ENCODE measurements at regions of chr10 and their contacts with region 1.

Region 1: DNA sequence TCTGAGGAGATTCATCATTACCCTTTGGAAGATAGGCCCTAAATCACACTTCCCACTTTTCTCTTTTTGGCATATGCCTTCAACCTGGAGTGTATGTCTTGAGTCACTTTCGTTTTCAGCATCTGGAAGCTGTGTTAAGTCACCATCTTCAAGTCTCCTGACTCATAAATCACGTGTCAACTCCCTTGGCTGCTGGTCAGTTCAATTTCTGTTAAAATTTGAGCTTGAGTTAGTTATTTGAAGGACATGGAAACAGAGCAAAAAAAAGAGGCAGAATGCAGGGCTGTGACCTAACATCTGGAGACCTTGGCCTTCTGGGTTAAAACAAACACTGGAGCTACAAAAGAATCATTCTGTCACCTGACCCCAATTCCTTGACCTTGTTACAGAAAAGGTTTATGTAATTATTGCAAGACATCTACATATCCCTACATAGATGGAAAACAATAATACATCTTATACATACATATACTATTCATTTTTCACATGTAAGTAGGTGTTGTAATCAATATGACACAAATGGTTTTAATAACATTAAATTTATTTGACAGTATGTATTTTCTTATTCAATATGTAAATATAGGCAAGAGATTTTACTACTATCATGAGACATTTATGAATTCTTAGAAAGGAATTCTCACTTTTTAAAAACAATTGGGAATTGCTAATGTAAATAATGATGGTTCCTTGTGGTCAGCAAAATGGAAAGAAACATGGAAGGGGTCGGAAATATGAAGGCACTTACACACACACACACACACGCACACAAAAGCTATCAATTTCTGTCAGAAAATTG is 169.7 kb upstream of the PHYHIPL start:
- DNase-seq: peak; percentile 86
- ATAC-seq: peak; percentile 26; the same call in 2 of the 3 replicates
- H3K4me3 ChIP-seq: peak overlapping the region in 2 of 3 experiments; percentile 17 to 45; a peak in 2 of 6 replicates
- H3K27ac ChIP-seq: peak overlapping the region; percentile 87
- H3K4me1 ChIP-seq: peaks cover 98% of the 10 kb centered on the region
- H3K27me3 ChIP-seq: no peaks in the 10 kb centered on the region
- CTCF ChIP-seq: no peak
- EP300 ChIP-seq: peak in 1 of 2 experiments; percentile 98; a peak in 2 of 4 replicates
- POLR2A ChIP-seq: no peak
- RAD21 ChIP-seq: no peak

Region 2: GRCh38 chr10:58041901-58042300 is 964.8 kb before region 1 on chr10:
- CTCF ChIA-PET with region 1: no interaction called
- POLR2A ChIA-PET with region 1: no interaction called
- in situ Hi-C with region 1: no loop called
- intact Hi-C with region 1: no loop called
- DNase-seq: no peak
- ATAC-seq: no peak
- H3K4me3 ChIP-seq: no peak overlapping the region
- H3K27ac ChIP-seq: no peak overlapping the region
- H3K4me1 ChIP-seq: no peaks in the 10 kb centered on the region
- H3K27me3 ChIP-seq: no peaks in the 10 kb centered on the region
- CTCF ChIP-seq: no peak
- EP300 ChIP-seq: no peak
- POLR2A ChIP-seq: no peak
- RAD21 ChIP-seq: no peak

Region 3: DNA sequence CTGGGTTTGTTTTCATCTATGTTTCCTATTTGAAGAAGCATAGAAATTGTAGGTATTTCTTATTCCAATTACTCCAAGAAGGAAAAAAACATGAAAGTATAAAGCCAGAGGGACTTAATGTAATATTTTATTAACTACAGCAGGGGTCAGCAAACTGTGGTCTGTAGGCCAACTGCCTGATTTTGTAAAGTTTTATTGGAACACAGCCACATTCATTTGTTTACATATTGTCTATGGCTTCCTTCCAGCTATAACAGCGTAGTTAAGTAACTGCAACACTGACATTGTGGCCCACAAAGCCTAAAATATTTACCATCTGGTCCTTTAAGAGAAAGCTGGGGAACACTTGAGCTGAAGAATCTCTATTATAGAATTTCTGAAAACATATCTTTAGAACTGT is 187.8 kb before region 1 on chr10:
- CTCF ChIA-PET with region 1: no interaction called
- POLR2A ChIA-PET with region 1: no interaction called
- in situ Hi-C with region 1: no loop called
- intact Hi-C with region 1: no loop called
- DNase-seq: peak; percentile 16
- ATAC-seq: no peak
- H3K4me3 ChIP-seq: no peak overlapping the region
- H3K27ac ChIP-seq: no peak overlapping the region
- H3K4me1 ChIP-seq: peaks cover 40% of the 10 kb centered on the region
- H3K27me3 ChIP-seq: no peaks in the 10 kb centered on the region
- CTCF ChIP-seq: no peak
- EP300 ChIP-seq: no peak
- POLR2A ChIP-seq: no peak
- RAD21 ChIP-seq: no peak

Region 4: DNA sequence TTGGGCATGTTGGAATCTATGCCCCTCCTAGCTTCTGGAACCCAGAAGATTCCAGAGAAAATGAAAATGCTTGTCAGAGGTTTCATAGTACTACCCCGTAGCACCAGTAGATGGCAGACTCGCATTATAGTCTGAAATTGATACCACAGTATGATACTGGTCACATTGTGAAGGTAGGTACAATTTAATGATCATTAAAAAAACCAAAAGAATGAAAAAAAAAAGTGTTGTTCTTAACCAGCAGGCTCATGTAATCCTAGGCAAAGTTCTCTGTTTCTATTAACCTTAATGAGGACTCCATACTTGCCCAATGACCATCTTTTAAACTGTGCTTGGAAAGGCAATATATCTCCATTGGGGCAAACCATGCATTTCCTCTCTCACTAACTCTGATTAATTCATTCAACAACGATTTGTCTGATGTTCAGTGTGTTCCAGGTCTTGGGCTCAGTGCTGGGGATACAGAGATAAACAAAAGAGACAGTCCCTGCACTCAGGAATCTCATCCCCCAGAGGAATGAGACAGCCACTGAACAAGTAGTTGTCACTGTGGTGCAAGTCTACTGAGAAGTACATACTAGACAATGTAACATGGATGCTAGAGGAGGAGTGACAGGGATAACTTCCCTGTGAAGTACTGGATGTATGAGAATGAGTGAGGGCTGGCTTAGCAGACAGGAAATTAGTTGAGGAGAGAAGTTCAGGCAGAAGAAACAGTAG is 53.8 kb before region 1 on chr10:
- CTCF ChIA-PET with region 1: no interaction called
- POLR2A ChIA-PET with region 1: interaction called, 4 read pairs
- in situ Hi-C with region 1: no loop called
- intact Hi-C with region 1: loop called (anchors 2 kb)
- DNase-seq: peak; percentile 53
- ATAC-seq: peak; percentile 86
- H3K4me3 ChIP-seq: no peak overlapping the region
- H3K27ac ChIP-seq: no peak overlapping the region
- H3K4me1 ChIP-seq: peaks cover 58% of the 10 kb centered on the region
- H3K27me3 ChIP-seq: no peaks in the 10 kb centered on the region
- CTCF ChIP-seq: peak; percentile 82
- EP300 ChIP-seq: no peak
- POLR2A ChIP-seq: no peak
- RAD21 ChIP-seq: peak; percentile 87

Region 5: GRCh38 chr10:58993480-58994221 is 13.1 kb before region 1 on chr10:
- CTCF ChIA-PET with region 1: no interaction called
- POLR2A ChIA-PET with region 1: interaction called, 136 read pairs
- in situ Hi-C with region 1: no loop called
- intact Hi-C with region 1: loop called (anchors 1 kb)
- DNase-seq: no peak
- ATAC-seq: no peak
- H3K4me3 ChIP-seq: peak overlapping the region in 1 of 3 experiments; percentile 23; a peak in 1 of 6 replicates
- H3K27ac ChIP-seq: peak overlapping the region; percentile 89
- H3K4me1 ChIP-seq: peaks cover 96% of the 10 kb centered on the region
- H3K27me3 ChIP-seq: no peaks in the 10 kb centered on the region
- CTCF ChIP-seq: no peak
- EP300 ChIP-seq: no peak
- POLR2A ChIP-seq: no peak
- RAD21 ChIP-seq: no peak

Region 6: DNA sequence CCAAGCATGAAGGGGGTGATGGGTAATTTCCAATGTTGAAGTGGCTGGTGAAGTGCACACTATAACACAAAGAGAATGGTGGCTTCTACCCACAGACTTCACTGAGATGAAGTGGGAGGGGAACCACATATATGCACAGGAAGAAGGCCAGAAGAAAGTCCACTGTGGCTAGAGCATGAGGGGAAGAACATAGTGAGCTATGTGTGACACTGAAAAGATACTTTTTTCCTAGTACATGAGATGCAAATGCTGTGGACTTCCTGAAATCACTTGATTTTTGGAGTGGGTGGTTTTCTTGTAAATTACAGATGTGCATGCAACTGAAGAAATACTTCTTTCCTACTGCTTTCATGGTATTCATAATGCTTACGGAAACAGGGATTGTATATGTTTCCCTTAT is 54.1 kb after region 1 on chr10:
- CTCF ChIA-PET with region 1: interaction called, 3 read pairs
- POLR2A ChIA-PET with region 1: interaction called, 8 read pairs
- in situ Hi-C with region 1: no loop called
- intact Hi-C with region 1: loop called (anchors 5 kb)
- DNase-seq: no peak
- ATAC-seq: no peak
- H3K4me3 ChIP-seq: no peak overlapping the region
- H3K27ac ChIP-seq: no peak overlapping the region
- H3K4me1 ChIP-seq: peaks cover 82% of the 10 kb centered on the region
- H3K27me3 ChIP-seq: no peaks in the 10 kb centered on the region
- CTCF ChIP-seq: no peak
- EP300 ChIP-seq: no peak
- POLR2A ChIP-seq: no peak
- RAD21 ChIP-seq: no peak

Region 7: GRCh38 chr10:59107147-59107546 is 100.4 kb after region 1 on chr10:
- CTCF ChIA-PET with region 1: no interaction called
- POLR2A ChIA-PET with region 1: interaction called, 13 read pairs
- in situ Hi-C with region 1: no loop called
- intact Hi-C with region 1: no loop called
- DNase-seq: peak; percentile 78
- ATAC-seq: peak; percentile 87
- H3K4me3 ChIP-seq: no peak overlapping the region
- H3K27ac ChIP-seq: peak overlapping the region; percentile 69
- H3K4me1 ChIP-seq: peaks cover 55% of the 10 kb centered on the region
- H3K27me3 ChIP-seq: no peaks in the 10 kb centered on the region
- CTCF ChIP-seq: no peak
- EP300 ChIP-seq: 0 out of 4 replicates have a peak, but pooled peaks of 1 of the 2 experiments have one; percentile 15
- POLR2A ChIP-seq: no peak
- RAD21 ChIP-seq: no peak

Region 8: DNA sequence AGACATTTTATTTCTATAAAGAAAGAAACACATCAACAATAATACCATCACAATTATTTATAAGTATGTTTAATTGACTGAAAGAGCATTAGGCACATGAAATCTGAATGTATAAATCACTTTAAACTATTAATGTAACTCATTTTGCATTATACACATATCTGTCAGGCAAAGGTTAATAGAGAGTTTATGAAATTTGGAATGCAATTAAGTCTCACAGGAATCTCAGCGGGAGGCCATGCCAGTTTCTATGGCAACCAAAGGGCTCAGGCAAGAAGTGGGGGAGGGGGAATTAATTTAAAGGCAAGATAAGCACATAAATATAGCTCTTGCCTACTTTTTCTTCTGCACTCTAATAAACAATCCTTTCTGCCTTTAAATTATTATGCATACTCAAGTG is 550.3 kb after region 1 on chr10:
- CTCF ChIA-PET with region 1: no interaction called
- POLR2A ChIA-PET with region 1: no interaction called
- in situ Hi-C with region 1: no loop called
- intact Hi-C with region 1: no loop called
- DNase-seq: no peak
- ATAC-seq: no peak
- H3K4me3 ChIP-seq: no peak overlapping the region
- H3K27ac ChIP-seq: no peak overlapping the region
- H3K4me1 ChIP-seq: no peaks in the 10 kb centered on the region
- H3K27me3 ChIP-seq: no peaks in the 10 kb centered on the region
- CTCF ChIP-seq: no peak
- EP300 ChIP-seq: no peak
- POLR2A ChIP-seq: no peak
- RAD21 ChIP-seq: no peak